Ascending aorta (tissue), 2 donors: ENCODE measurements at regions of chr17 and their contacts with region 1.

Region 1: DNA sequence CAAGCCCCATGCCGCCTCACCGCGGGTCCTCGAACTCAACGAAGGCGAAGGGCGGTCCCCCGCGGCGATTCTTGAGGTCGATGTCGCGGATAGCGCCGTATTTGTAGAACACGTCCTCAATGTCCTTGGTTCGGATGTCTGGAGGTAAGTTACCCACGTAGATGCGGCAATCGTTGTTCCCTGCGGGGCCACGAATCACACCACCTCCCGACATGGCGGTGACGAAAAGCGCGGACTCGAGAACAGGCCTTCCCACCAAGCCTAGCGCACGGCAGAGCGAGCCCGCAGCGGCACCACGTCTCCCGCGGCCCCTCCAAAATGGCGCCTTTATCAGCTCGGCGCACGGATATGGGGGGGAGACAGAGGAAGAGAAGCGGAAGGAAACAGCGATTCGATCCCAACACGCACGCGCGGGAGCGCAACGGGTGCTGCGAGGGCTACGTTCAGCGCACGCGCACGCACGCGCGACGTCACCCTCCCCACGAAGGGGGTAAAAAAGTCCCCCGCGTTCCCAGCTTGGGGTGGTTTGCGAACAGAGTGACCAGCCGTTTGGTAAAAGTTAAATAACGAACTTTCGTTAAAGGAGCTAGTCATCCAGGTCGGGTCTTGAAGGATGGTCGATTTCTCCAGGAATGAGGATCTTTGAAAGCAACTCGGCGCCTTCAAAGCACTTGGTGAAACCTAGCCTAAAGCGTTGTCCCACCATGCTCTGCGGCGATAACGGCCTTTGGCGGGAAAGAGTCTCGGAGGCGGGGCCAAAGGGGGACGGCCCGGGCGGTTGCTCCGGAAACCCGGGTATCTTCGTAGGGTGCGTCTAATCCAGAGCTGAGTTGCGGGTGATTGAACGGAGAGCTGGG is at the start of gene SRSF1:
- DNase-seq: peak; percentile 81 to 98
- H3K4me3 ChIP-seq: peak within 1 kb of the TSS; percentile 84 to 85
- H3K27ac ChIP-seq: peak within 1 kb of the TSS; percentile 96 to 99
- H3K4me1 ChIP-seq: peaks cover 4 to 33% of the 10 kb centered on the region in 2 donors
- H3K27me3 ChIP-seq: no peaks in the 10 kb centered on the region
- CTCF ChIP-seq: no peak
- total RNA-seq, gene SRSF1: 89.4 TPM

Region 2: GRCh38 chr17:57106107-57106835 is 900.9 kb before region 1 on chr17:
- intact Hi-C with region 1: loop called (anchors 10 kb)
- DNase-seq: no peak
- H3K4me3 ChIP-seq: no peak overlapping the region
- H3K27ac ChIP-seq: peak overlapping the region; percentile 90 to 91
- H3K4me1 ChIP-seq: peaks cover 21 to 47% of the 10 kb centered on the region in 2 donors
- H3K27me3 ChIP-seq: no peaks in the 10 kb centered on the region
- CTCF ChIP-seq: peak in 2 of 3 experiments; percentile 23 to 25

Region 3: GRCh38 chr17:57987580-57988421 is 19.4 kb before region 1 on chr17 and contains the start of gene VEZF1:
- intact Hi-C with region 1: loop called (anchors 2 kb)
- DNase-seq: peak in 1 of 2 donors; percentile 85
- H3K4me3 ChIP-seq: peak within 1 kb of the TSS; percentile 84 to 85
- H3K27ac ChIP-seq: peak within 1 kb of the TSS; percentile 97 to 98
- H3K4me1 ChIP-seq: peaks cover 0 to 19% of the 10 kb centered on the region in 2 donors
- H3K27me3 ChIP-seq: no peaks in the 10 kb centered on the region
- CTCF ChIP-seq: no peak
- total RNA-seq, gene VEZF1: 47.4 TPM

Region 4: DNA sequence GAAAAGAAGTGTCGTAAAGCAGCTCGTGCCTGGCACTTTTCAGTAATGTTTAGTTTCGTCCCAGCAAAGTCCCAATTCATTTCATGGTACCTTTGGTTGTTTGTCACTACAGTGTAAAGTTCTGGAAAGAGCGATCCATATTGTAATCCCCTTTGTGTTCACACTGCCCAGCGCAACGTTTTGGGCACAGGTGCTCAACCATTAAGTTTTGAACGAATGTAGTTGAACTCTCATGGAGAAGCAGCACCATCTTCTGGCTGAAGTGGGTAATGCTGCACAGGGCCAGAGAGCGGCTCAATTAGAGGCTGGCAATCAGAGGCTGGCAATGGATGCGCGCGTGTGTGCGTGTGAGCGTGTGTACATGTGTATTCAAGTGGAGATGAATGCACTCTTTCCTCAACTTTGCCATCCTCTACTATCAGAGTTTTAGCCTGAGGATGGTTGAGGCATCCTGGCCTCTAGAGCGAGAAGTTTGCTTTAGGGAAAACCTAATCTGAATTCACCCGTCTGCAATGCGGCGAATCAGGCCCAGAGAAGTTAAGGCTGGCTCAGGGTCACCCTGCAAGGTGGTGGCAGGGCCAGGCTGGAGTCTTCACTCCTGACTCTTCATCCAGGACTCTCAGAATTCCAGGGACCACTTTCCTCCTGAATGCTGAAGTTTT is 105.9 kb after region 1 on chr17:
- intact Hi-C with region 1: loop called (anchors 5 kb)
- DNase-seq: peak; percentile 17 to 87
- H3K4me3 ChIP-seq: no peak overlapping the region
- H3K27ac ChIP-seq: no peak overlapping the region
- H3K4me1 ChIP-seq: no peaks in the 10 kb centered on the region
- H3K27me3 ChIP-seq: no peaks in the 10 kb centered on the region
- CTCF ChIP-seq: peak; percentile 88 to 98 (median 90)